WTC11 (cell line): ENCODE measurements at regions of chr10 and their contacts with region 1.

Region 1: DNA sequence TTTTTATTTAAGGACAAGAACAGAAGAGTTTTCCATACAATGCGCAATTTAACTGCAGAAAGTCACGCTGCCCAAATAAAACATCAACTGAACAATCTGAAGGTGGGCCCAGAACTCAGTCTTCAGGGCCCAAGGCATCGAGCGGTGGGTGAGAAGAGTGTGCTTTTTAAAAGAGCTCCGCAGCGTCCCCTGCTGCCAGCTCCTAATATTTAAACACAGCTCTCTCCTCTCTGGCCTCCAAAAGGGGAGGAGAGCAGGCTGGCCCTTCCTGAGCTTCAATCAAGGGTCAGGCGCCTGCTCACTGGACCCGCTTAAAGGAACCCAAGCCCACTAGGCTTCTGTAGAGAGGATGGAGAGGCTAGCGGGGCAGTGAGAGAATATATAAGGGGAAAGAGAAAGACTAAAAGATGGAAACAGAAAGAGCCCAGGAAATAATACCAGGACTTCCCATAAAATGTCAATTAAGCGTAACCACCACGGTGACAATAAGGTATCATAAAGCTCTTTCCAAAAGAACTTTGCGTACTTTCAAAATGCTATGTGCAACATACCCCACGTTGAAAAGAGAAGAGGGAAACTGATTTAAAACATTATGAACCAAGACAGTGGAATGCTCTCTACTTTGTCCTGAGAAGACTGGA is 2.8 kb downstream of the FAM53B start:
- DNase-seq: peak; percentile 88
- ATAC-seq: peak; percentile 62
- H3K4me3 Mint-ChIP-seq: peak overlapping the region; percentile 50
- H3K27ac Mint-ChIP-seq: no peak overlapping the region
- H3K4me1 Mint-ChIP-seq: peaks cover 73% of the 10 kb centered on the region
- H3K27me3 Mint-ChIP-seq: peaks cover 19% of the 10 kb centered on the region
- CTCF ChIP-seq: peak; percentile 79

Region 2: GRCh38 chr10:124565565-124566256 is 175.7 kb before region 1 on chr10:
- CTCF ChIA-PET with region 1: interaction called, 19 read pairs
- POLR2A ChIA-PET with region 1: no interaction called
- DNase-seq: peak; percentile 82
- ATAC-seq: peak; percentile 94
- H3K4me3 Mint-ChIP-seq: no peak overlapping the region
- H3K27ac Mint-ChIP-seq: peak overlapping the region; percentile 77
- H3K4me1 Mint-ChIP-seq: peaks cover 15% of the 10 kb centered on the region
- H3K27me3 Mint-ChIP-seq: no peaks in the 10 kb centered on the region
- CTCF ChIP-seq: peak; percentile 63

Region 3: DNA sequence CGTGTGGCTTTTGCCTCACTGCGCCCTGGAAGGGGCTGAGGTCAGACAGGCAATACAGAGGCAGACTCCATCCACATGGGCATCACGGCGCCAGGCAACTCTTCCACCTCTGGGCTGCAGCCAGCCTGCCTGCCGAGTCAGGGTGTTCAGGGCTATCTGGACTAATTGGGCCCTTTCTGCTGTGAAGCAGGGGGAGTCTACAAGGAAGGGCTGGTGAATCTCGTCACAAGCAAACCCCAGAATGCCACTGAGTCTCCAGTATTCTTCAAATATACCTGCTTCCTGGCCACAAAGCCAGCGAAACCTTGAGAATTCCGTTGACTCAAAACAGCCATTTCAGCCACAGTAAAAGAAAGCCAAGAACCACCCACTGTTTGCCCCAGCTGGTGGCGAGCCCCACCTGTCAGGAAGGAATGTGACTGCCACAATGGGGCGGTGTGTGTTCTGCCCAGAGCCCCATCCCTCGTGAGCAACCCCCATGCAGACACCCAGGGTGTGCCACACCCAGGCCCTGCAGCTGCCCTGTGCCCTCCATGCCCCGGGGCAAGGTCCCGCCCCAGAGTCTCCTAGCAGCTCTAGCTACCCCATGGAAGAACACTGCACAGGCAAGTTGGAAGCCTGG is 114.5 kb before region 1 on chr10:
- CTCF ChIA-PET with region 1: interaction called, 32 read pairs
- POLR2A ChIA-PET with region 1: no interaction called
- DNase-seq: peak; percentile 34
- ATAC-seq: peak; percentile 17
- H3K4me3 Mint-ChIP-seq: no peak overlapping the region
- H3K27ac Mint-ChIP-seq: peak overlapping the region; percentile 91
- H3K4me1 Mint-ChIP-seq: peaks cover 31% of the 10 kb centered on the region
- H3K27me3 Mint-ChIP-seq: no peaks in the 10 kb centered on the region
- CTCF ChIP-seq: no peak

Region 4: DNA sequence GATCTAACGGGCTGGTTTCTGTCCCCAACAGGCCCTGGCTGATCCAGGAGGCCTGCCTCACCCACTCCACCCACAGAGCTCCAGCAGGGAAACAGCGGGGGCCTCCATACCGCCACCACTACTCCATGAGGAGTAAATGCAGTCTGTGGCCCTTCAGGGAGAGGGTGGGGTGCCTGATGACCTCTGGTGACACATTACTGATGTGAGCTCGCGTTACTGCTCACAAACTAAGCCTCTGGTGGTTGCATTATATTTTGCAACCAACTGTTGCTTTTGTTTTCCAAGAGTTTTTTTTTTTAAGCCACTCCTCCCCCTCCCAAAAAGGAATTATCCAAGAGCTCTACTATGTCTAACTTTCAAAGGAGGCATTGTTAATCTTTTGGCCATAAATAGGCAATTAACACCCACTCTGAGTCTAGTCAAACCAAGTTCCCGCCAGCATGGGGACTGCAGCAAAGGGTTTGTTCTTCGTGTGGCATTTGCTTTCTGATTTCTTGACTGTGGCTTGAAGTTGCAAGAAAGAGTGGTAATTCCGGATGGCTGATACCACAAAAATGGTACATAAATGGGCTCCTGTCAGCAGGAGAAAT is 69.8 kb before region 1 on chr10:
- CTCF ChIA-PET with region 1: interaction called, 32 read pairs
- POLR2A ChIA-PET with region 1: interaction called, 4 read pairs
- DNase-seq: no peak
- ATAC-seq: peak; percentile 61
- H3K4me3 Mint-ChIP-seq: no peak overlapping the region
- H3K27ac Mint-ChIP-seq: peak overlapping the region; percentile 67
- H3K4me1 Mint-ChIP-seq: peaks cover 23% of the 10 kb centered on the region
- H3K27me3 Mint-ChIP-seq: no peaks in the 10 kb centered on the region
- CTCF ChIP-seq: no peak

Region 5: GRCh38 chr10:124724279-124725027 is 16.9 kb before region 1 on chr10:
- CTCF ChIA-PET with region 1: interaction called, 53 read pairs
- POLR2A ChIA-PET with region 1: interaction called, 4 read pairs
- DNase-seq: no peak
- ATAC-seq: peak; percentile 47
- H3K4me3 Mint-ChIP-seq: no peak overlapping the region
- H3K27ac Mint-ChIP-seq: no peak overlapping the region
- H3K4me1 Mint-ChIP-seq: peaks cover 31% of the 10 kb centered on the region
- H3K27me3 Mint-ChIP-seq: no peaks in the 10 kb centered on the region
- CTCF ChIP-seq: no peak